Mammary epithelial cell (primary cell): ENCODE measurements at regions of chr10 and their contacts with region 1.

Region 1: GRCh38 chr10:49538381-49539319 is at the start of gene ERCC6:
- DNase-seq: peak; percentile 97
- H3K4me3 ChIP-seq: peak within 1 kb of the TSS; percentile 58 to 86 (median 74)
- H3K27ac ChIP-seq: peak within 1 kb of the TSS; percentile 93
- H3K4me1 ChIP-seq: peaks cover 50% of the 10 kb centered on the region
- H3K27me3 ChIP-seq: no peaks in the 10 kb centered on the region
- CTCF ChIP-seq: peak in 1 of 2 donors; percentile 6
- total RNA-seq, gene ERCC6: 35.5 to 106 TPM

Region 2: GRCh38 chr10:49187950-49188761 is 350.5 kb before region 1 on chr10 and contains the start of gene TMEM273:
- CTCF ChIA-PET with region 1: no interaction called
- dilution Hi-C with region 1: no loop called
- in situ Hi-C with region 1: no loop called
- intact Hi-C with region 1: no loop called
- DNase-seq: no peak
- H3K4me3 ChIP-seq: no peak within 1 kb of the TSS
- H3K27ac ChIP-seq: no peak within 1 kb of the TSS
- H3K4me1 ChIP-seq: no peaks in the 10 kb centered on the region
- H3K27me3 ChIP-seq: peaks cover 6% of the 10 kb centered on the region
- CTCF ChIP-seq: no peak
- total RNA-seq, gene TMEM273: not detected

Region 3: DNA sequence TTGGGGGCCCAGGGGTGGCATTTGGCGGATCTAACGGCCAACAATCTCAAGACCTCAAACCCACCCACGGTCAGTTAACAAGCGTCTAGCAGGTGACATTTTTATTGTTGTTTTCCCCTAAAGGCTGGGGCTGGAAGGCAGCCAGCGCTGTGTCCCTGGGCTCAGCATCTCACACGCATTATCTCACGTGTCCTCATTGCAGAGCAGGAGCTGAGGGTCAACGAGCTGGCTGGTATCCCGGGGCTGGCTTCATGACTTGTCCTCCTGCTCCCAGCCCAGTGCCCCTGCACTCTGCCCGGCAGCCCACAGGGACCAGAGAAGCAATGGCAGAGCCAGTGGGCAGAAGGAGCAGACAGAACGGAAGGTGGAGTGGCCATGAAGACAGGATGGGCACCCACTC is 296.0 kb before region 1 on chr10:
- CTCF ChIA-PET with region 1: no interaction called
- dilution Hi-C with region 1: no loop called
- in situ Hi-C with region 1: no loop called
- intact Hi-C with region 1: no loop called
- DNase-seq: no peak
- H3K4me3 ChIP-seq: no peak overlapping the region
- H3K27ac ChIP-seq: no peak overlapping the region
- H3K4me1 ChIP-seq: no peaks in the 10 kb centered on the region
- H3K27me3 ChIP-seq: no peaks in the 10 kb centered on the region
- CTCF ChIP-seq: no peak

Region 4: GRCh38 chr10:49552249-49552672 is 13.6 kb after region 1 on chr10:
- CTCF ChIA-PET with region 1: no interaction called
- dilution Hi-C with region 1: no loop called
- in situ Hi-C with region 1: no loop called
- intact Hi-C with region 1: loop called (anchors 1 kb)
- DNase-seq: peak; percentile 90
- H3K4me3 ChIP-seq: no peak overlapping the region
- H3K27ac ChIP-seq: peak overlapping the region; percentile 99
- H3K4me1 ChIP-seq: peaks cover 51% of the 10 kb centered on the region
- H3K27me3 ChIP-seq: no peaks in the 10 kb centered on the region
- CTCF ChIP-seq: no peak

Region 5: DNA sequence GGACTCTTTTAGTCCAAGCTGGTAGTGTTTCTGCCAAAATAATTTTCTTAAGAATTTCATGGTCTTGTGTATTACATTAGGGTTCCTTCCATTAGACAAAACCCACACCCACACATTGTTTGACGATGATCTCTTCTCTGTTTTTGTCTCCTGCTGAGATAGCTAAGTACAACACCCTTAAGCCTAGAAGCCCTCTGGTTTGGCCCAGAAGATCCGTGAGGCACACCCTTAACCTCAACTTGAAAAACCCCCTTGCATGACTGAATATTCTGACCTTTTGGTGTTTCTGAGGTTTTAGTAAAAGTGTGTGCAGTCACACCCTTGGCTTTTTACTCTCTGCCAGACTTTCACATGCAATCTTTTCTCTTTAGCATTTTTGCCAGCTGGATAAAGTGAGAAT is 29.6 kb after region 1 on chr10:
- CTCF ChIA-PET with region 1: no interaction called
- dilution Hi-C with region 1: no loop called
- in situ Hi-C with region 1: no loop called
- intact Hi-C with region 1: loop called (anchors 1 kb)
- DNase-seq: peak; percentile 86
- H3K4me3 ChIP-seq: peak overlapping the region in 1 of 3 experiments; percentile 29
- H3K27ac ChIP-seq: peak overlapping the region; percentile 96
- H3K4me1 ChIP-seq: peaks cover 44% of the 10 kb centered on the region
- H3K27me3 ChIP-seq: no peaks in the 10 kb centered on the region
- CTCF ChIP-seq: no peak

Region 6: GRCh38 chr10:49761789-49762565 is 223.3 kb after region 1 on chr10 and contains the start of gene OGDHL:
- CTCF ChIA-PET with region 1: no interaction called
- dilution Hi-C with region 1: no loop called
- in situ Hi-C with region 1: no loop called
- intact Hi-C with region 1: loop called (anchors 10 kb)
- DNase-seq: peak; percentile 44
- H3K4me3 ChIP-seq: peak within 1 kb of the TSS; percentile 36 to 52 (median 51)
- H3K27ac ChIP-seq: no peak within 1 kb of the TSS
- H3K4me1 ChIP-seq: no peaks in the 10 kb centered on the region
- H3K27me3 ChIP-seq: no peaks in the 10 kb centered on the region
- CTCF ChIP-seq: no peak
- total RNA-seq, gene OGDHL: 0.33 to 0.40 TPM

Region 7: DNA sequence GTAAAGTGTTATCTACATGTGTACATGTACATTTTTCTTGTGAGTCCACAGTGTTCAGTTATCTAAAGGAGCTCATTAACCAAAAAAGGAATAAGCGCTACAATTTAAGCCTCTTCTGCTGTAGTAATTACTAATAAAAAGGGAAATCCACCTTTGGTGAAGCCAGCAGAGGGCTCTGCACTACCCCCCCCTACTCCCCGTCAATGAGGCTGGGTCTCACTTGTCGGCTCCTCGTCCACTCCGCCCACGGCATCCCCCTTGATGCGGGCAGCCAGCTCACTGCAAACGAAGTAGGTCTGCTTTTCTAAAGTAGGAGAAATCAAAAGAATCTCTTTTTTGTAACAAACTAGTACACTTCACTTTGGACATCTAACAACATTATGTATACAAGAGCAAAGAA is 524.5 kb after region 1 on chr10:
- CTCF ChIA-PET with region 1: no interaction called
- dilution Hi-C with region 1: no loop called
- in situ Hi-C with region 1: no loop called
- intact Hi-C with region 1: no loop called
- DNase-seq: no peak
- H3K4me3 ChIP-seq: no peak overlapping the region
- H3K27ac ChIP-seq: no peak overlapping the region
- H3K4me1 ChIP-seq: no peaks in the 10 kb centered on the region
- H3K27me3 ChIP-seq: no peaks in the 10 kb centered on the region
- CTCF ChIP-seq: no peak

Region 8: GRCh38 chr10:50624866-50625692 is 1086.4 kb after region 1 on chr10:
- CTCF ChIA-PET with region 1: no interaction called
- dilution Hi-C with region 1: no loop called
- in situ Hi-C with region 1: no loop called
- intact Hi-C with region 1: no loop called
- DNase-seq: peak; percentile 58
- H3K4me3 ChIP-seq: peak overlapping the region; percentile 79 to 86 (median 82)
- H3K27ac ChIP-seq: peak overlapping the region; percentile 70
- H3K4me1 ChIP-seq: peaks cover 32% of the 10 kb centered on the region
- H3K27me3 ChIP-seq: no peaks in the 10 kb centered on the region
- CTCF ChIP-seq: peak; percentile 28 to 60